ENCODE measurements at regions of chr4 and their contacts with region 1.

Region 1: DNA sequence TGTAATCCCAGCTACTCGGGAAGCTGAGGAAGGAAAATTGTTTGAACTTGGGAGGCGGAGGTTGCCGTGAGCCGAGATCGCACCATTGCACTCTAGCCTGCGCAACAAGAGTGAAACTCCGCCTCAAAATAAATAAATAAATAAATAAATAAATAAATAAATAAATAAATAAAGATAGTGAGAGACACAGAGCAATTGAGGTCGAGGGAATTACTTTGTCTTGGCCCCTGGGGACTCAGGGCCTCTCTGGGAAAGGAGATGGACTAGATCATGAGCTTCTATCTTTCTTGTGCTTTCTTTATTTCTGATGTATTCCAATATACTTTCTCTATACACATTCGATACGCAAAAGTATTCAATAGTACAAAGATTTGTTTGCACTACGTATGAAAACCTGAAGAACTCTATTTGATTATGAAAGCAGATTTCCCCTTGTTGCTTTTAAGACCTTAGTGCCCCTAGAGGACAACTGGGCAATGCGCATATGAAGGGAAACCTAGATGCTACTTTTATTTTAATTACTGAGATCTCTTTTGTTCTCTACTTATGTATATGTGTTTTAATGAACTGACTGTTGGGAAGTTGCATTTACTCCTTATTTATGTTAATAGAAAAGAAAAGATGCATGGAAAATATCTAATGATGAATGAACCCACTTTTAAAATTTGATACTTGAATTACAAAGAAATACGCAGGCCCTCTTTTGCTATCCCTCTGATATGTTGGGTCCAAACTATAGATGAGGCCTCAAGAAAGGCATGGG is 12.8 kb upstream of the ELOVL6 start:
- DNase-seq: no peak
- H3K4me3 ChIP-seq: no peak overlapping the region
- H3K27ac ChIP-seq: no peak overlapping the region
- H3K4me1 ChIP-seq: no peaks in the 10 kb centered on the region
- H3K27me3 ChIP-seq: no peaks in the 10 kb centered on the region
- CTCF ChIP-seq: peak; percentile 62 to 78

Region 2: DNA sequence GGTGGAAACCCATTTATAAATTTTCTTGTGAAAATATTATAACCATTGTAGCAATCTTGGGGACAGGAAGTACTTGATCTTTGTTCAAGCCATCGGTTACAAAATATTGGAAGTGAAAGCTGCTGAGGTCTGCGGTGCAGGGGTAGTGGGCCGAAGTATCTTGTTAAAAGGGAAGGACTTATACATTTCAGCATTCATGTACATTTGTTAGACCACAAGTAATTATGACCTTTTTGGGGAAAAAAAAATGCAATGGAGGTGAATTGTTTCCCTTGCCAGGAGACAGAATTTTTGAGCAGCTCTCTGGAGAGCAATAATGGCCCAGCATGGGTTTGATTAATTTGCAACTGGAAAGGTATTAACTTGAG is 177.2 kb before region 1 on chr4:
- intact Hi-C with region 1: no loop called
- DNase-seq: peak in 1 of 2 donors; percentile 34
- H3K4me3 ChIP-seq: no peak overlapping the region
- H3K27ac ChIP-seq: no peak overlapping the region
- H3K4me1 ChIP-seq: no peaks in the 10 kb centered on the region
- H3K27me3 ChIP-seq: peaks cover 0 to 8% of the 10 kb centered on the region in 2 donors
- CTCF ChIP-seq: no peak

Region 3: DNA sequence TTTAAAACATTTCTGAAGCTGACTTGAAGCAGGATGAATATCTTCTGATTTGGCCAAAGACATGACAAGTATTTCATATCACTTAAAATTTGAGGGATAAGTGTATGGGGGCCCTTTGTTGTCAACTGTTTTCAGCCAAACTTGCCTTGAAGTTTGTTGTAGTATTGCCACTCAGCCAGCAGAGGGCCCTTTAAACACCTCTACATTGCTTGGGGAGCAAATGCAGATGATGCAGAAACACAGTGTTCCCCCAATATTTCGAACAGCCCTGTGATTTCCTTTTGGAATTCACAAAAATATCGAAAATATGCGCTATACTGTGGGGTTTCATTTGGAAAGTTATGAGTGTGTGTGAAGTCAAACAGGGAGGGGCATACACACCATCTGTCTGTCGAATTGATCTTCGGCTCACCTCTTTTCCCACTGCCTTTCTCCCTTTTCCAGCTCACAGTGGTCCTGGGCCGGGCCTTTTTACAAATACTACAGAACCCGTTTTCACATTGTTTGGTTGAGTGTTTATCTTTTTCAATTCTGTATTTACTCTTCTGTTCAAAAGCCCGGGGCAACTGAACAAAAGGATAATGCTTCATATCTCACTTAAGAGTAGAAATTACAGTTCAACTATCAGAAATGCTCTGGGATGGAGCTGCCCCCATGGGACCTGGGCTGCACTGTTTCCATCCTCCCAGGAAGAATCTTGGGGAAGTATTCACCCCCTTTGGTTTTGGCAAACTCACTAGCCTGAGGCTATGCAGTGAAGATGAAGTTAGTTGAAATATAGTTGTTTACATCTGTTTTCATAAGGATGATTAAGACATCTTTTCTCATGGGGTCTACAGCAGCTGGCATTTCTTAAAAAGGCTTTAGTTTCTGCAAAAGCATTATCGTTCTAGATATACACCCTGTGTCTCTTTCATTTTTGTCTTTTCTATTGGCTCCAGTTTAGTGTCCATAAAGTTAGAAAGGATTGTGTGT is 160.9 kb before region 1 on chr4:
- intact Hi-C with region 1: loop called (anchors 5 kb)
- DNase-seq: peak in 1 of 2 donors; percentile 38
- H3K4me3 ChIP-seq: no peak overlapping the region
- H3K27ac ChIP-seq: no peak overlapping the region
- H3K4me1 ChIP-seq: no peaks in the 10 kb centered on the region
- H3K27me3 ChIP-seq: no peaks in the 10 kb centered on the region
- CTCF ChIP-seq: peak; percentile 65 to 66

Measured in tibial artery (tissue), 4 donors.